ENCODE measurements at regions of chr20 and their contacts with region 1.

Region 1: GRCh38 chr20:62668441-62669027 is 26.2 kb downstream of the SLCO4A1 start:
- DNase-seq: peak; percentile 58 to 83 (median 82)
- ATAC-seq: peak; percentile 52 to 53
- H3K4me3 ChIP-seq: no peak overlapping the region
- H3K27ac ChIP-seq: no peak overlapping the region
- H3K4me1 ChIP-seq: no peaks in the 10 kb centered on the region
- H3K27me3 ChIP-seq: no peaks in the 10 kb centered on the region

Region 2: DNA sequence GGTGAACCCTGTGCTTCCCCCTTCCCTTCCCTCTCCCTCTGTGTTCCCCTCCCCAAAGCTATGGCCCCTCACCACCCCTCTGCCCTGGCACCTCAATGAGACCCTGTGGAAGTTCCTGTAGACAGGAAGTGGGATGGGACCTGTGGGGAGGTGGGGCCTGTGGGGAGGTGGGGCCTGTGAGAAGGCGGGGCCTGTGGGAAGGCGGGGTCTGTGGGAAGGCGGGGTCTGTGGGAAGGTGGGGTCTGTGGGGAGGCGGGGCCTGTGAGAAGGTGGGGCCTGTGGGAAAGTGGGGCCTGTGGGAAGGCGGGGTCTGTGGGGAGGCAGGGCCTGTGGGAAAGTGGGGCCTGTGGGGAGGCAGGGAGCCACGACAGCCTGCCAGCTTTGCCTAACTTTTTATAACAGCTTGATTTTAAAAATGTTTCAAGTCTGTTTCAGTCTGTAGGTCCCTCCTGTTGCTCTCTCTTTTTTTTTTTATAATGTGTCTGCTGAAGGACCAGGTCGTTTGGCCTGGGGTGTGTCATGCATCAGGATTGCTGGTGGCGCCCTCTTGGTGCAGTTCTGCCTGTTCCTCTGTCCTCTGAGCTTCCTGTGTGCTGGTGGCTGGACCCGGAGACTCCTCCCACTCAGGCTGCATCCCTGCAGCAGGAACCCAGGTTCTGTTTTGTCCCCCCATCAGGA is 96.7 kb before region 1 on chr20:
- intact Hi-C with region 1: no loop called
- DNase-seq: peak in 1 of 3 donors; percentile 69
- ATAC-seq: peak; percentile 37 to 43
- H3K4me3 ChIP-seq: no peak overlapping the region
- H3K27ac ChIP-seq: no peak overlapping the region
- H3K4me1 ChIP-seq: no peaks in the 10 kb centered on the region
- H3K27me3 ChIP-seq: no peaks in the 10 kb centered on the region

Region 3: GRCh38 chr20:62793912-62794724 is 125.6 kb after region 1 on chr20:
- intact Hi-C with region 1: loop called (anchors 2 to 5 kb)
- DNase-seq: peak; percentile 97 to 99 (median 99)
- ATAC-seq: peak; percentile 92 to 94
- H3K4me3 ChIP-seq: peak overlapping the region; percentile 33
- H3K27ac ChIP-seq: peak overlapping the region; percentile 93
- H3K4me1 ChIP-seq: peaks cover 7% of the 10 kb centered on the region
- H3K27me3 ChIP-seq: no peaks in the 10 kb centered on the region

Region 4: GRCh38 chr20:62808211-62808865 is 139.8 kb after region 1 on chr20:
- intact Hi-C with region 1: loop called in 1 of 4 experiments (anchors 5 kb)
- DNase-seq: peak; percentile 66 to 89 (median 88)
- ATAC-seq: peak; percentile 40 to 51
- H3K4me3 ChIP-seq: no peak overlapping the region
- H3K27ac ChIP-seq: no peak overlapping the region
- H3K4me1 ChIP-seq: peaks cover 11% of the 10 kb centered on the region
- H3K27me3 ChIP-seq: no peaks in the 10 kb centered on the region

Region 5: GRCh38 chr20:63089051-63089891 is 420.7 kb after region 1 on chr20:
- intact Hi-C with region 1: no loop called
- DNase-seq: peak in 1 of 3 donors; percentile 22
- ATAC-seq: no peak
- H3K4me3 ChIP-seq: no peak overlapping the region
- H3K27ac ChIP-seq: no peak overlapping the region
- H3K4me1 ChIP-seq: no peaks in the 10 kb centered on the region
- H3K27me3 ChIP-seq: no peaks in the 10 kb centered on the region

Measured in right cardiac atrium (tissue), 5 donors.